ENCODE measurements at regions of chr3 and their contacts with region 1.

Region 1: DNA sequence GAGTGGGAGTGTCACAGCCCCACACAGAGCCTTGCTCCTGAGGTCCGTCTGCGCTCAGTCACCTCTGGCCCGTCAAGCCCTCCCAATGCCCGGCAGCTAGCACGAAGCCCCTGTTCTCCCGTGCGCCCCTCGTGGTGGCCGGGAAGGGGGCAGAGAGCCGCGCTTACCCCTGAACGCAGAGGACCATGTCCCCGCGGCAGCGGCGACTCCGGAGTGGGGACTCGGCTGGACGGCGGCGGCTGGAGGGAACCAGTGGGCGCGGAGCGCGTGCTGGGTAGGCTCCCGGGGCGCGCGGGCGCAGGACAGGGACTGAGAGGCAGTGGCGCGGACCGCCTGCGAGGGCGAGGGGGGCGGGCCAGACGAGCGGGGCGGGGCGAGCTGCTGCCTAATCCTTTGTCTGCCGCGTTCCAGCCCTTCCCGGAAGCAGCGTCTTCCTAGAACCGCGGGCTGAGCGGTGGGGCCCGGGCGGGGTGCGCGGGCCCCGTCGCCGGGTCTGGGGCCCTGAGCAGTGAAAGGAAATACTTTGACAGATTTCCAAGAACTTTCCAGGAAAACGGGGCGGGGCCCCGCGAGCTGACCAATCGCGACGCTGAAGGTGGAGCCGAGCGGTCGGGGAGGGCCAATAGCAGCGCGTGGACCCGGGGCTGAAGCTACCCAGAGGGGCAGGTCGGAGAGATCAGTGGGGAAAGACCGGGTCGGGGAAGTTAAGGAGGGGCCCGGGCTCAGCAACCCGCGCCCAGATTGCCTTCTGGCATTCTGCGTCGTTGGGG is at the start of gene CISH:
- DNase-seq: peak; percentile 75
- total RNA-seq, gene CISH: 1.7 and 2.2 TPM in 2 replicates

Region 2: DNA sequence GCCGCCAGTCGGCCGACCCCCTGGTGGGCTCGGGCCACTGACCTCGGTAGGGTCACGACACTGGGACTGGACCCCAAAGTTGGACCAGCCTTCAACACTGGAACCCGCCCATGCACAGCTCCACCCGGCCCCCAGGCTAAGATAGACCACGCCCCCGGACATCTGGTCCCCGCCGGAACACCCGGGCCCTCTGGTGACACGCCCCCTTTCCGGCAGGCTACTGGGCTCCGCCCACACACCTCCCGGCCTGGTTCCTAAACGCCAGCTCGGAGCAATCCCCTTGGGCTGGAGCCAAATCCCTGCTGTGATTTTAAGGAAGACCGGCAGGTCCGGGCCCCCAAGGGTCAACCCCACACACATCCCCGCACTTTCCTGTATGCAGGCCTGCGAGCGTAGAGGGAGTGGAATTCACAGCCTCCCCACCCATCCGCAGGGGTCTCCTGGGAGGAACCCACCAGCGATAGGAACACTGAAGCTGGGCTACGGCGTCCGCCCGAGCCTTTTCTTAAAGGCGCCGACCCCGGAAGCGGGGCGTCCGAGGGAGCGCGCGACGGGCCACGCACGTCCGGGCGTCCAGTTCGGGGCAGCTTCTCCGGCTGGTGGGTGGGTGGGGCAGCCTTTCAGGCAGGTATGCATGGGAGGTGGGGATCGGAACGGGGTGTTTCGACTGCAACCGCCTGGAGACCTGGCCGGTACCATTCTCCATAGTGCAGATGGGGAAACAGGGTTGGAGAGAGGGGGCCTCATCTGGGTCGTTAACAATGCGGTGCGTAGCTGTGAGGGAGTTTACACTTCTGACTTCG is 42.5 kb before region 1 on chr3 and contains the start of gene HEMK1:
- in situ Hi-C with region 1: no loop called
- DNase-seq: peak; percentile 86
- total RNA-seq, gene HEMK1: 3.4 and 9.5 TPM in 2 replicates

Region 3: GRCh38 chr3:51391075-51391567 is 779.5 kb after region 1 on chr3 and contains the start of gene RBM15B:
- in situ Hi-C with region 1: loop called (anchors 25 kb)
- DNase-seq: peak; percentile 94
- total RNA-seq, gene RBM15B: 48.4 and 52.6 TPM in 2 replicates

Measured in G401 (cell line).